Mucosa of descending colon (tissue), 3 donors: ENCODE measurements at regions of chrX and their contacts with region 1.

Region 1: GRCh38 chrX:50905334-50905733 is 5.2 kb upstream of the BMP15 start:
- DNase-seq: peak in 1 of 3 donors; percentile 27
- ATAC-seq: no peak
- H3K4me3 ChIP-seq: no peak overlapping the region
- H3K4me1 ChIP-seq: no peaks in the 10 kb centered on the region
- CTCF ChIP-seq: no peak

Region 2: GRCh38 chrX:50747471-50747900 is 157.8 kb before region 1 on chrX:
- intact Hi-C with region 1: loop called in 1 of 2 experiments (anchors 5 kb)
- DNase-seq: no peak
- ATAC-seq: peak; percentile 53
- H3K4me3 ChIP-seq: no peak overlapping the region
- H3K4me1 ChIP-seq: no peaks in the 10 kb centered on the region
- CTCF ChIP-seq: no peak

Region 3: DNA sequence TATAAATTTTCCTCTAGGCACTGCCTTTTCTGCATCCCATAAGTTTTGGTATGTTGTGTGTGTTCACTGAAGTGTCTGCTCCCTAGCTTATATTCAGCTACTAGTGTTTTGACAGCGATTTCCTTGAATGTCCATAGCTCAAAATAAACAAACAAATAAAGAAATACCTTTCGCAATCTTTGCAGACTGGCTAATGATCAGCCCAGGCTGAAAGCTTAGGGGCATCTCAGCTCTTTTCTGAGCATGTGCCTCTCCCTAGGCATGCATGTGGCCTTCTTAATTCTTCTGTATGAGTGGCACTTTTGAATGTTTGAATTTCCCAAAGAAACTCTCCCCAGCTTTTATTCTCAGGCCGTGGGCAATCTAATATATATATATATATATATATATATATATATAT is 46.8 kb before region 1 on chrX:
- intact Hi-C with region 1: loop called in 1 of 2 experiments (anchors 5 kb)
- DNase-seq: no peak
- ATAC-seq: no peak
- H3K4me3 ChIP-seq: no peak overlapping the region
- H3K4me1 ChIP-seq: no peaks in the 10 kb centered on the region
- CTCF ChIP-seq: no peak

Region 4: GRCh38 chrX:51144852-51145442 is 239.6 kb after region 1 on chrX:
- intact Hi-C with region 1: no loop called
- DNase-seq: peak in 1 of 3 donors; percentile 41
- ATAC-seq: peak; percentile 63
- H3K4me3 ChIP-seq: no peak overlapping the region
- H3K4me1 ChIP-seq: no peaks in the 10 kb centered on the region
- CTCF ChIP-seq: no peak